Posterior cingulate gyrus (tissue), 11 donors: ENCODE measurements at regions of chr1 and their contacts with region 1.

Region 1: DNA sequence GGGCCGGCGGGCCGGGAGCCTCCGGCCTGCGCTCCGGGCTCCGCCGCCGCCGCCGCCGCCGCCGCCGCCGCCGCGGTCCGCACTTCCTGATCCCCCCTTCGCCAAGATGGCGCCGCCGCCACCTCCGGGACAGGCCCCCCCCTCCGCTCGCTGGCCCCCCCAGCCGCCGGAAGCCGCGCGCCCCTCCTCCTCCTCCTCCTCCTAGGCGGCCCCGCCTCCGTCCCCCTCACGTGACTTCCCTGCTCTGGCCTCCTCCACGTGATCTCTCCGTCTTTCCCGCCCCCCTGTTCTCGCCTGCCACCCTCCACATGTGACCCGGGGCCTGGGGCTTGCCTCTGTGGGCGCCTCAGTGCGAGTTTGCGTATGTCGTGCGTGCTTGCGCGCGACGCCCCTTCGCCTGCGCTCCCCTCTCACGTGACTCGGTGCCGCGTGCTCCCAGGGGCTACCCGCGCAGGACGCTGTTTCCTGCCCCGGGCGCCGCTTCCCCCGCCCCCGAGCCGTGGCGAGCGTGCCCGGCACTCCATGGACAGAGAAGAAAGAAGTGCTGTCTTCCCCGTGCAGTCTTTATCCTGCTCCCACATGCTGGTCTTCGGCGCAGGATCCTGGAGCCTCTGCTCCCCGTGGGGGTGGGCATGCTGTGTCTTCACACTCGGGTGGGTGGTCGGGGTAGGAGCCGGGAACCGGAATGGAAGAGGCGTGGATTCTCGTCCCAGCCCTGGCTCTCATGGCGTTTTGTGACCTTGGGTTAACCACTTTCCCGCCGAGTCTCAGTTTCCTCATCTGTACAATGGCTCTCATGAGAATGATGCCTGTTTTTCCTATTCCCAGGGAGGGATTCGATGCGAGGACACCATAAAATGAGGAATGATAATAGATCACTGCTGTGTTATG is at the start of gene UBE2Q1:
- DNase-seq: peak; percentile 98 to 100 (median 99)

Region 2: DNA sequence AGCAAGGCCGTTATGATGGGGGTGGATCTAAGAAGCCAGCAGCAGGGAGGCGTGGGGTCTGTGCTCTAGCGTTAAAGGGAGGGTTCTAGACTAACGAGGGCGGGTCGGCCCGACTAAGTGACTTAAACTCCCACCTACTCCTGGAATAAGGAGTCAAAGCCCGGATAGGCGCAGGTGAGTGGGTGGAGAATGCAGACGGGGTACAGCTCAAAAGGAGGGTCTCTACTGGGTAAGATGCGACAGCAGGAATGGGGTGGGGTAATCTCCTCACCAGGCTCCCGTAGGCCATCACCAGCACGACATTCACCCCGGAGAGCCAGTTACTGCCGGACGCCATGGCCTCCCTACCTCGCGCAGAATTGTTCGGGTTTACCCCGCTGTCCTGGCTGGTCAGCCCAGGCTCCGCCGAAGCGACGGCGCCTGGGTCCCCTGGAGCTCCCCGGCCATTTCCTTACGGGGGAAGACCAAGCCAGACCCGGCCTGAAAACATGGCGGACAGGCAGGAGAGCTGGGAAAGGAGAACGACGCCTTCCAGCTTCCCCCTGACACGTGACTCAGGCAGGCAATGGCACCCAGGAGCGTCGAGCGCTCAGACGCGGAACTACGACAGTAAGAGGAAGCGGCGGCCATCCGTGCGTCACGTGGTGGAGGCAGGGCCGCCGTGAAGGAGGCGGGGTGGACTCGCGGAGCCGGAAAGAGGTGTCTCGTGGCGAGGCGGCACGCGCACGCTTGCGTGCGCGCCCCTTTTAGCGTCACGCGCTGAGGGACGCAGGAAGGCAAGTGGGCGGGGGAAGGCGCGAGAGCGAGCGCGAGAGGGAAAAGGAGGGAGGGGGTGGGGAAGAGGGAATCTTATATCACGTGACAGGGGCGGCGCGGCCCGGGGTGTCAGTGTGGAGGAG is 338.5 kb before region 1 on chr1 and contains the start of gene UBAP2L:
- intact Hi-C with region 1: loop called (anchors 2 kb)
- DNase-seq: peak; percentile 98 to 100 (median 98)

Region 3: GRCh38 chr1:154870115-154870571 is 311.3 kb after region 1 on chr1 and contains the start of gene KCNN3:
- intact Hi-C with region 1: loop called (anchors 2 kb)
- DNase-seq: peak; percentile 88 to 99 (median 93)

Region 4: DNA sequence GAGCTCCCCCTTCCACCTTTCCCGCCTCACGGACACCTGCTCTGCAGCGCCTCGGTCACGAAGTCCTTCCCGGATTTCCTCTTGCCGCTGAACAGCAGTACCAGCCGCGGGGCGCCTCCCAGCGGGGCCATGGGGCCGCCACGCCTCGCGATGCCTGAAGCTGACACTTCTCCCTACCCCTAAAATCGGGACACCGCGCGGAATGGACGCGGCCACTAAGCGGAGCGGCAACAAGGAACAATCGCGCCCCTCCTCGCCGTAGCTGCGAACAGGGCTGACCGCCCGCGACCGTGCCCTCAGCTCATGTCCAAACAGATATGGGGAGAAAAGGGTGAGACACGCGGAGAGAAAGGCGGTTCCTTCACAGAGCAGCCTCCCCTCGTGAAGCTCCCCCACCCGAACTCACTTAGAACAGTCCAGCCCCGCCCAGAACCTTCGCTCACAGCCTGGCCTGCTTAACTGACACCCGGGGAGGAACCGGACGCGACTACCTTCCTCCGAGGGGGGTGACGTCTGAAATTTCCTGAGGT is 377.8 kb after region 1 on chr1 and contains the start of gene PMVK:
- intact Hi-C with region 1: loop called (anchors 2 kb)
- DNase-seq: peak; percentile 93 to 99 (median 97)

Region 5: GRCh38 chr1:155063550-155064110 is 504.8 kb after region 1 on chr1 and contains the start of gene EFNA4:
- intact Hi-C with region 1: loop called (anchors 10 kb)
- DNase-seq: peak in 7 of 10 donors; percentile 53 to 93 (median 67)